Breast epithelium (tissue), 4 donors: ENCODE measurements at regions of chr14 and their contacts with region 1.

Region 1: DNA sequence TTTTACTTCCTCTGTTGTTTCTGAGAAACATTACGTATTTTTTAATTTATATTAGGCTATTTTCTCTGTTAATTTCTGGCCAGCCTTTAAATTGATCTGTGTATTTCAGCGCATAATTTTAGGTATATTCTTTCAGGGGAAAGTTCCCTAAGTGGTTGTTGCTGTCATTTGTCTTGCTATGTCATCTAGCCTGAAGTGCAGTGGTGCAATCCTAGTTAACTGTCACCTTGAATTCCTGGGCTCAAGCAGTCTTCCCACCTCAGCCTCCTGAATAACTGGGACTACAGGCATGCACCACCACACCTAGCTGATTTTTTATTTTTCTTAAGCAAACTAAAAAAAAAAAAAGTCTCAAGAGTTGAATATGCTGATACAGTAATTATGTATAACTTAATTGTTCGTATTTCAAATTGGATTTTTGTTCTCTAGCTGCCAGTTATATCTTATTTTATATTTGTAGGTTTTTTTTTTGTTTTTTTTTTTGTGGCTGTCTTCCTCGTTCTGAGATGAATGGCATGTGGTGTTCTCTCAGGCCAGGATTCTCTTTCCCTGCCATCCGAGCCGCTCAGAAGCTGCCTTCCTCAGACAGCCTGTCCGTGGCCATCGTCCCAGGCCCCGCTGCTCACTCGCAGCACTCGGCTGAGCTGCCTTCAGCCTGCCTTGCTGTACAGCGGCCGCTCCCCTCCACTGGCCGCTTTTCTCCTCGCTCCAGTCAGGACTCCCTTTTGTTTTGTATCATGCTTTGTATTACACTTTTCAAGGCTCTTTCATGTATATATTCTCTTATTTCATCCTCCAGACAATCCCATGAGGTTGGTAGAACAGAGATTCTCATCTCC is 53.2 kb downstream of the WDR20 start:
- DNase-seq: no peak
- H3K4me3 ChIP-seq: no peak overlapping the region
- H3K27ac ChIP-seq: no peak overlapping the region
- H3K4me1 ChIP-seq: no peaks in the 10 kb centered on the region
- H3K27me3 ChIP-seq: no peaks in the 10 kb centered on the region
- CTCF ChIP-seq: no peak
- POLR2A ChIP-seq: no peak

Region 2: GRCh38 chr14:102154821-102155549 is 37.9 kb before region 1 on chr14:
- intact Hi-C with region 1: no loop called
- DNase-seq: no peak
- H3K4me3 ChIP-seq: no peak overlapping the region
- H3K27ac ChIP-seq: no peak overlapping the region
- H3K4me1 ChIP-seq: no peaks in the 10 kb centered on the region
- H3K27me3 ChIP-seq: no peaks in the 10 kb centered on the region
- CTCF ChIP-seq: no peak
- POLR2A ChIP-seq: no peak

Region 3: GRCh38 chr14:102182190-102182589 is 10.7 kb before region 1 on chr14:
- intact Hi-C with region 1: no loop called
- DNase-seq: no peak
- H3K4me3 ChIP-seq: no peak overlapping the region
- H3K27ac ChIP-seq: no peak overlapping the region
- H3K4me1 ChIP-seq: no peaks in the 10 kb centered on the region
- H3K27me3 ChIP-seq: no peaks in the 10 kb centered on the region
- CTCF ChIP-seq: no peak
- POLR2A ChIP-seq: no peak

Region 4: DNA sequence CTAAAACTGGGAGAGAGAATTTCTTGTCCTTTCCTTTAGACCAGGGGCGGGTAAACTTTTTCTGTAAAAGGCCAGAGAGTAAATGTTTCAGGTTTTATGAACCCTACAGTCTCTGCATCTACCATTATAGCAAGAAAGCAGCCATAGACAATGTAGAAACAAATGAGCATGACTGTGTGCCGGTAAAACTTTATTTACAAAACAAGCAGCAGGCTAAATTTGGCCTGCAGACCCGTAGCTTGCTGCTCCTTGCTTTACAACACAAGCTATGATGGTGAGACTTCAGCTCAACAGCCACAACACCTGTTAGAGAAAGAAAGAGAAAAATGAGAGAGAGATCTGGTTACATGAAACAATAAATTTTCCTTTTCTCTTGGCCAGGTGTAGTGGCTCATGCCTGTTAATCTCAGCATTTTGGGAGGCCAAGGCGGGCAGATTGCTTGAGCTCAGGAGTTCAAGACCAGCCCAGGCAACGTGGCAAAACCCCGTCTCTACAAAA is 868.6 kb after region 1 on chr14:
- intact Hi-C with region 1: loop called (anchors 5 kb)
- DNase-seq: no peak
- H3K4me3 ChIP-seq: no peak overlapping the region
- H3K27ac ChIP-seq: no peak overlapping the region
- H3K4me1 ChIP-seq: peaks cover 0 to 8% of the 10 kb centered on the region in 2 donors
- H3K27me3 ChIP-seq: no peaks in the 10 kb centered on the region
- CTCF ChIP-seq: no peak
- POLR2A ChIP-seq: no peak

Region 5: DNA sequence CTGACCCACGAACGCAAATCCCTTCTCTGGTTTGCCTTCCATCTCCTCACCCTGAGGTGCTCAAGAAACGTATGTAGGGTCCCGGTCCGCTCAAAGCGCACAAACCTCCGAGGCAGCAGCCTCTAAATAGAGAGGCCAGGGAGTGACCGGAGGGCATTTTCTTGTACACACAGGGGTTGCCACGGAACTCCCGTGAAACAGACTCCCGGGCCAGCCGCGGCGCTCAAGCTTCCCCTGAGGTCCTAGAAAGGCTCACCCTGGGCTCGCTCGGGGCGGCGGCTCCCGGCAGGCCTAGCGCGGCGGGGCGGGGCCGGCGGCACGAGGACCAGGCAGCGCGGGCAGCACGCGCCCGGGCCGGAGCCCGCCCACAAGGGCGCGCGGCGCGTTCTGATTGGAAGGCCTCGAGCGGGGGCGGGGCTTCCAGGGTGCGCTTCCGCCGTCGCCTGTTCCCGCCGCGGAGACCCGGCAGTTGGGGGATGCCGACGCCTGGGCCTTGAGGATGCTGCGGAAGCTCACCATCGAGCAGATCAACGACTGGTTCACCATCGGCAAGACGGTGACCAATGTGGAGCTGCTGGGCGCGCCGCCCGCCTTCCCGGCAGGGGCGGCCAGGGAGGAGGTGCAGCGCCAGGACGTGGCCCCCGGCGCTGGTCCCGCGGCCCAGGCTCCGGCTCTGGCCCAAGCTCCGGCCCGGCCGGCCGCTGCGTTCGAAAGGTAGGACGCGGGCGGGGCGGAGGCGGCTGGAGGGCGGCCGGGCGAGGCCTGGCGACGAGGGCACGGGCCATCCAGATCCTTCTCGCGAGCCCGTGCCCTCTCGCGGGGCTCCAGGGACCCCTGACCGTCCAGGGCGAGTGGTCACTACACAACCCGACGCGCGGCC is 1735.4 kb after region 1 on chr14 and contains the start of gene TDRD9:
- intact Hi-C with region 1: no loop called
- DNase-seq: no peak
- H3K4me3 ChIP-seq: peak within 1 kb of the TSS in 2 of 3 donors; percentile 28 to 51
- H3K27ac ChIP-seq: no peak within 1 kb of the TSS
- H3K4me1 ChIP-seq: no peaks in the 10 kb centered on the region
- H3K27me3 ChIP-seq: peaks cover 0 to 8% of the 10 kb centered on the region in 2 donors
- CTCF ChIP-seq: no peak
- POLR2A ChIP-seq: no peak
- total RNA-seq, gene TDRD9: 0.96 to 4.0 (median 2.9) TPM